BJ (cell line): ENCODE measurements at regions of chr5 and their contacts with region 1.

Region 1: DNA sequence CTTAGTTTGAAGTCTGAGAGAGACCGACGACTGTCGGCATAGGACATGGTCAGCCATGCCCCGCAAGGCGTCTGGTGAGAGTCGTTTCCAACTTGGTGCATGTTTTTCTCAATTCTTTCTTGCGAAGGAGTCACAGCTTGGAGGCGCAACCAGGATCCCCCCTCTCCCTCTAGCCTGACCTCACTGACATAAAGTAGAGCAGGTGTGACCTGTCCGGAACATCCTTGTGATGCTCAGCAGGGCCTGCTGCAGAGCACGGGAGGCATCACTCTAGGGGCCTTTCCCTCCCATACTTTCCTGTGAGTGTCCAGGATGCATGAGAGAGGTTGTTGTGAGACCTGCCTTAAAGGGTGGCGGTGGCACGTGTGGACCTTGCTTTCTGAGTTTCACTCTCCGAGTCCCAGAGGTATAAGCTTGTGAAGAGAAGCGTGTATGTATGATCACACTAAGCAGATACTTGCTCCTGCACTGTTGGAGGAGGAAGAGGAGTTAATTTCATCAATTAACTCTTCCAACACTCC is 5.0 kb downstream of the TENT4A start:
- DNase-seq: no peak
- H3K4me3 ChIP-seq: no peak overlapping the region
- H3K27me3 ChIP-seq: no peaks in the 10 kb centered on the region
- CTCF ChIP-seq: no peak

Region 2: DNA sequence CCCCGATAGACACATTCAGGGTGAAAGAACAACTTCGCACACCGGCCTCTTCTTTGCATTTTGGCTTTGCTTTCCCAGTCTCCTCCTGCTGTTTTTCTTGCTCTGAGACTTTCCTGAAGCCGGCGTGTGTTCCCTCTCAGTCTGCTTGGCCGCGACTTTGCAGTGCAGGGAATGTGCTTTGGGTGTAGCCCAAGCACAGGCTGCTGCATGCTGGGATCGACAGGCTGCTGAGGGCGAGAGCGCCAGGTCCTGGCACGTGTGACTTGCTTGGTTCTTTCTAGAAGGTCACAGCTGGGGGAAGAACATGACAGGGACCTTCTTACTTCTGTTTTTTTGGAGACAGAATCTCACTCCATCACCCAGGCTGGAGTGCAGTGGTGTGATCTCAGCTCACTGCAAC is 35.6 kb after region 1 on chr5:
- CTCF ChIA-PET with region 1: no interaction called
- POLR2A ChIA-PET with region 1: no interaction called
- DNase-seq: no peak
- H3K4me3 ChIP-seq: no peak overlapping the region
- H3K27me3 ChIP-seq: no peaks in the 10 kb centered on the region
- CTCF ChIP-seq: no peak

Region 3: GRCh38 chr5:6765612-6766525 is 47.6 kb after region 1 on chr5:
- CTCF ChIA-PET with region 1: no interaction called
- POLR2A ChIA-PET with region 1: interaction called, 11 read pairs
- DNase-seq: no peak
- H3K4me3 ChIP-seq: no peak overlapping the region
- H3K27me3 ChIP-seq: no peaks in the 10 kb centered on the region
- CTCF ChIP-seq: peak; percentile 83